Breast epithelium (tissue), 4 donors: ENCODE measurements at regions of chr2 and their contacts with region 1.

Region 1: GRCh38 chr2:22035361-22035830 is 911.6 kb downstream of the TDRD15 start:
- DNase-seq: no peak
- H3K4me3 ChIP-seq: no peak overlapping the region
- H3K27ac ChIP-seq: no peak overlapping the region
- H3K4me1 ChIP-seq: no peaks in the 10 kb centered on the region
- H3K27me3 ChIP-seq: no peaks in the 10 kb centered on the region
- CTCF ChIP-seq: no peak
- POLR2A ChIP-seq: no peak

Region 2: GRCh38 chr2:22020091-22020742 is 15.2 kb before region 1 on chr2:
- intact Hi-C with region 1: loop called (anchors 1 kb)
- DNase-seq: no peak
- H3K4me3 ChIP-seq: no peak overlapping the region
- H3K27ac ChIP-seq: no peak overlapping the region
- H3K4me1 ChIP-seq: no peaks in the 10 kb centered on the region
- H3K27me3 ChIP-seq: no peaks in the 10 kb centered on the region
- CTCF ChIP-seq: no peak
- POLR2A ChIP-seq: no peak

Region 3: GRCh38 chr2:23436346-23437098 is 1401.1 kb after region 1 on chr2:
- intact Hi-C with region 1: no loop called
- DNase-seq: peak in 1 of 2 donors; percentile 17
- H3K4me3 ChIP-seq: no peak overlapping the region
- H3K27ac ChIP-seq: no peak overlapping the region
- H3K4me1 ChIP-seq: no peaks in the 10 kb centered on the region
- H3K27me3 ChIP-seq: no peaks in the 10 kb centered on the region
- CTCF ChIP-seq: no peak
- POLR2A ChIP-seq: no peak